Heart left ventricle (tissue), 16 donors: ENCODE measurements at regions of chr6 and their contacts with region 1.

Region 1: GRCh38 chr6:25490018-25490801 is 161.8 kb upstream of the SCGN start:
- DNase-seq: peak; percentile 61 to 74 (median 72)
- ATAC-seq: peak; percentile 57 to 90 (median 86)
- H3K4me3 ChIP-seq: no peak overlapping the region
- H3K27ac ChIP-seq: peak overlapping the region in 4 of 12 donors; percentile 6 to 37 (median 26)
- H3K4me1 ChIP-seq: peaks cover 0 to 28% (median 15%) of the 10 kb centered on the region in 12 donors
- H3K27me3 ChIP-seq: no peaks in the 10 kb centered on the region
- CTCF ChIP-seq: peak; percentile 59 to 87 (median 78)
- POLR2A ChIP-seq: no peak

Region 2: GRCh38 chr6:25193460-25194171 is 296.6 kb before region 1 on chr6:
- intact Hi-C with region 1: no loop called
- DNase-seq: peak in 3 of 5 donors; percentile 33 to 55 (median 50)
- ATAC-seq: peak in 3 of 4 donors; percentile 47 to 79 (median 71)
- H3K4me3 ChIP-seq: peak overlapping the region in 3 of 12 donors; percentile 3 to 13 (median 12)
- H3K27ac ChIP-seq: peak overlapping the region; percentile 54 to 87 (median 74)
- H3K4me1 ChIP-seq: peaks cover 0 to 26% (median 8%) of the 10 kb centered on the region in 12 donors
- H3K27me3 ChIP-seq: no peaks in the 10 kb centered on the region
- CTCF ChIP-seq: no peak
- POLR2A ChIP-seq: no peak

Region 3: GRCh38 chr6:25278914-25279747 is 211.1 kb before region 1 on chr6 and contains the start of gene CARMIL1:
- intact Hi-C with region 1: loop called (anchors 1 to 5 kb)
- DNase-seq: peak; percentile 79 to 89 (median 81)
- ATAC-seq: peak; percentile 65 to 94 (median 92)
- H3K4me3 ChIP-seq: peak within 1 kb of the TSS; percentile 64 to 96 (median 76)
- H3K27ac ChIP-seq: peak within 1 kb of the TSS; percentile 23 to 87 (median 62)
- H3K4me1 ChIP-seq: peaks cover 0 to 25% (median 8%) of the 10 kb centered on the region in 12 donors
- H3K27me3 ChIP-seq: peaks cover 0 to 20% (median 0%) of the 10 kb centered on the region in 9 donors
- CTCF ChIP-seq: peak; percentile 56 to 91 (median 74)
- POLR2A ChIP-seq: no peak
- total RNA-seq, gene CARMIL1: 2.4 to 9.1 (median 5.8) TPM